ENCODE measurements at regions of chr22 and their contacts with region 1.

Region 1: GRCh38 chr22:23385291-23386244 is 194.5 kb downstream of the IGLL1 start:
- DNase-seq: peak; percentile 96
- H3K4me3 ChIP-seq: no peak overlapping the region
- H3K27ac ChIP-seq: no peak overlapping the region
- H3K4me1 ChIP-seq: peaks cover 0 to 23% (median 11%) of the 10 kb centered on the region in 4 donors
- H3K27me3 ChIP-seq: peaks cover 0 to 17% (median 0%) of the 10 kb centered on the region in 4 donors
- CTCF ChIP-seq: peak in 2 of 3 experiments; percentile 97
- EP300 ChIP-seq: no peak
- POLR2A ChIP-seq: no peak

Region 2: DNA sequence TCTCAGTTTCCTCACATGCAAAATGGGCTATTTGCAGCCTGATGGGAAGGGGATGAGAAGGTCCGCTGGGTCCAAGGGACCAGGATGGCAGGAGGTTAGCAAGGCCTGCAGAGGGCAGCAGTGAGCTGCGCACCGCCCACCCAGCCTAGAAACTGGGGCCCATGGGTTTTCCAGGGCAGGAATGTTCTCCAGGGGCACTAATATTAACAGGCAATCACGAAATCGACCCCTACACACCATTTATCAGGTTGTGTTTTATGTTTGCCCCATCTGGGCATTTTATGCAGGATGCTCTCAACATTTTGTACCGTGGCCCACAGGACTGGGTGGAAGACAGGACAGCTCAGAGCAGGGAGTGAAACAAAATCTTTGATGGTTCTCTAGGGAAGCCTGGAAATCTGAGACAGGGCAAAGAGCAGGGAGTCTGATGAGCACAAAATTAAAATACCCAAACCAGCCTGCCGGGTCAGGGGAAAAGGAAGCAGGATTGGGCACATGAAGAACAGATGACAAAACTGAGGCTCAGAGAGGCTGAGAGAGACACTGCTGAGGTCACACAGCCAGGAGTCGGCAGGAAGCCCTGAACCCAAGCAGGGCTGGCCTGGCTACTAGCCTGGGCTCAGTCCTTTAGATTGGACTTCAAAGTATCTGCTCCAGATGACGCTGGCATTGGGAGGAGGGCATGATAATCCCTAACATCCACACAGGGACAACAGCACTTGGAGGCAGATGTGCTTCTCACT is 206.9 kb before region 1 on chr22:
- intact Hi-C with region 1: loop called (anchors 5 kb)
- DNase-seq: no peak
- H3K4me3 ChIP-seq: peak overlapping the region in 1 of 4 donors; percentile 69
- H3K27ac ChIP-seq: peak overlapping the region; percentile 85 to 89 (median 87)
- H3K4me1 ChIP-seq: peaks cover 37 to 56% (median 52%) of the 10 kb centered on the region in 4 donors
- H3K27me3 ChIP-seq: no peaks in the 10 kb centered on the region
- CTCF ChIP-seq: peak; percentile 95 to 97 (median 97)
- EP300 ChIP-seq: no peak
- POLR2A ChIP-seq: no peak

Region 3: DNA sequence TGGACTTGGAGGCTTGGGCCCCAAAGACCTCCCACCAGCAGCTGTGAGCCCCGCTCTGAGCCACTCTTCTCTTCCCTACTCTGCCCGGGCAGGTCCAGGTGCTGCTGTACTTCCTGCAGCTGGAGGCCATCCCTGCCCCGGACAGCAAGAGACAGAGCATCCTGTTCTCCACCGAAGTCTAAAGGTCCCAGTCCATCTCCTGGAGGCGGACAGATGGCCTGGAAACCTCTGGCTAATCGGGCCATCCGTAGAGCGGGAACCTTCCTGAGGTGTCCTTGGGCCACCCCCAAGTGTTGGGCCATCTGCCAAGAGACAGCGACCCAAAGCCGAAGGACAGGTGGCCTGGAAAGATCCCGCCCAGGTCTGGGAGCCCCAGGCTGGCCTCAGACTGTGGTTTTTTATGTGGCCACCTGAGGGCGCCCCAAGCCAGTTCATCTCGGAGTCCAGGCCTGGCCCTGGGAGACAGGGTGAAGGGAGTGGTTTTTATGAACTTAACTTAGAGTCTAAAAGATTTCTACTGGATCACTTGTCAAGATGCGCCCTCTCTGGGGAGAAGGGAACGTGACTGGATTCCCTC is 70.1 kb before region 1 on chr22:
- intact Hi-C with region 1: loop called (anchors 1 kb)
- DNase-seq: peak; percentile 90
- H3K4me3 ChIP-seq: no peak overlapping the region
- H3K27ac ChIP-seq: peak overlapping the region in 3 of 4 donors; percentile 4 to 40 (median 39)
- H3K4me1 ChIP-seq: peaks cover 0 to 5% (median 0%) of the 10 kb centered on the region in 4 donors
- H3K27me3 ChIP-seq: no peaks in the 10 kb centered on the region
- CTCF ChIP-seq: peak; percentile 53 to 70 (median 69)
- EP300 ChIP-seq: no peak
- POLR2A ChIP-seq: no peak